ENCODE measurements at regions of chr5 and their contacts with region 1.

Region 1: DNA sequence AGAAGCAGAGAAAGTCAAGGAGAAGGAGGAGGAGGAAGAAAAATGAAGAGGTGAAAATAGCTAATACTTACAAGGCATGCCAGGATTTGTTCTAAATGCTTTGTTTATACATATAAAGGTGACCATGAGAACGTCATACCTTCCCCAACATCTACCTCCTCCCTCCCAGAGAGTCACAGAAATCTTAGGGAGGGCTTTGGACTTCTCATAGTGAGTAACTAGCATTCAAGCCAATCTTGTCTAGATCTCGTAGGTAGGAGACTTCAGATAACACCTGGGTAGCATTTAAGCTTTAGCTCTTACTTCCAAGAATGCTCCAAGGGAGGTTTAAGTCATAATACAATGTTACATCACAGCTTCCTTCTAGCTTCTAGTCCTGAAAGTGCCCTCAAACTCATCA is 36.5 kb upstream of the GPBP1 start:
- DNase-seq: no peak
- H3K4me3 Mint-ChIP-seq: no peak overlapping the region
- H3K27ac Mint-ChIP-seq: no peak overlapping the region
- H3K4me1 Mint-ChIP-seq: no peaks in the 10 kb centered on the region
- H3K27me3 Mint-ChIP-seq: no peaks in the 10 kb centered on the region

Region 2: GRCh38 chr5:56900858-56901578 is 236.4 kb before region 1 on chr5:
- CTCF ChIA-PET with region 1: interaction called, 78 read pairs
- POLR2A ChIA-PET with region 1: no interaction called
- intact Hi-C with region 1: loop called (anchors 1 kb)
- DNase-seq: peak; percentile 24
- H3K4me3 Mint-ChIP-seq: no peak overlapping the region
- H3K27ac Mint-ChIP-seq: no peak overlapping the region
- H3K4me1 Mint-ChIP-seq: peaks cover 5% of the 10 kb centered on the region
- H3K27me3 Mint-ChIP-seq: no peaks in the 10 kb centered on the region

Region 3: GRCh38 chr5:56909294-56910209 is 227.8 kb before region 1 on chr5 and contains the start of gene SETD9:
- CTCF ChIA-PET with region 1: interaction called, 78 read pairs
- POLR2A ChIA-PET with region 1: no interaction called
- intact Hi-C with region 1: no loop called
- DNase-seq: peak; percentile 97
- H3K4me3 Mint-ChIP-seq: peak within 1 kb of the TSS; percentile 77
- H3K27ac Mint-ChIP-seq: peak within 1 kb of the TSS; percentile 94
- H3K4me1 Mint-ChIP-seq: peaks cover 20% of the 10 kb centered on the region
- H3K27me3 Mint-ChIP-seq: no peaks in the 10 kb centered on the region
- total RNA-seq, gene SETD9: 5.1 to 7.4 TPM

Region 4: DNA sequence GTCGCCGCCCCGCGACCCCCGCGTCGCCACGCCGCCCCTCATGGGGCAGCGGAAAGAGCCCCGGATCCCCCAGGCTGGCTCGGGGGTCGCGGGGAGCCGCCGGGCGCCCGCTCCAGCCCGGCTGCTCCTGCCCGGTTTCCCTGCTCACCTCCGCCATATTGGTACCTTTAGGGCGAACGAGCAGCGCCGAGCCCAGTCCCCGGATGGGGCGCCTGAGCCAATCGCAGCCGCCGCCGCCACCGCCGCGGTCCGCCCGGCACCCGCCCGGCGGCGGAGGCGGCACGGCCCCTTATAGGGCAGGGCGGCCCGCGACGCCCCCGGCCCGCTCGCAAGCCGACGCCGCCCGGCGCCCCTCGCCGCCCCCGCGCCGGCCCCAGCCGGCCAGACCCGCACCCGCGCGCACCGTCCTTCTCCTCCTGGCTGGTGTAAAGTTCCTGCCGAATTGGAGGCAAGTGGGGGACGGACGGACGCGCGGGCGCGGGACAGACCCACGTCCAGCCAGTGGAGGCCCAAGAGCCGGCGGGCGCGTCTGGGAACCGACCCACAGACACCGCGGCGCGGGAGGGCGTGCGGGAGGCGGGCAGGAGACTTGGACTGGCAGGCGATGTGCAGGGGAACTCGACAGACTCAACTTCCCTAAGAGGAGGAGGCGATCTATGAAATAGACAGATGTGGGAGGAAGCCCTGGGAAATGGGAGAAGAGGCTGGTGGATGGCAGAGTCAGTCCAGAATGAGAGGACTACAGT is 185.3 kb before region 1 on chr5 and contains the start of gene MIER3:
- CTCF ChIA-PET with region 1: interaction called, 17 read pairs
- POLR2A ChIA-PET with region 1: no interaction called
- intact Hi-C with region 1: no loop called
- DNase-seq: peak; percentile 86
- H3K4me3 Mint-ChIP-seq: peak within 1 kb of the TSS; percentile 96
- H3K27ac Mint-ChIP-seq: peak within 1 kb of the TSS; percentile 69
- H3K4me1 Mint-ChIP-seq: peaks cover 15% of the 10 kb centered on the region
- H3K27me3 Mint-ChIP-seq: peaks cover 11% of the 10 kb centered on the region
- total RNA-seq, gene MIER3: 16.5 to 17.2 TPM

Region 5: GRCh38 chr5:57150681-57151080 is 13.3 kb after region 1 on chr5:
- CTCF ChIA-PET with region 1: interaction called, 13 read pairs
- POLR2A ChIA-PET with region 1: no interaction called
- intact Hi-C with region 1: no loop called
- DNase-seq: no peak
- H3K4me3 Mint-ChIP-seq: no peak overlapping the region
- H3K27ac Mint-ChIP-seq: no peak overlapping the region
- H3K4me1 Mint-ChIP-seq: no peaks in the 10 kb centered on the region
- H3K27me3 Mint-ChIP-seq: peaks cover 3% of the 10 kb centered on the region

Region 6: DNA sequence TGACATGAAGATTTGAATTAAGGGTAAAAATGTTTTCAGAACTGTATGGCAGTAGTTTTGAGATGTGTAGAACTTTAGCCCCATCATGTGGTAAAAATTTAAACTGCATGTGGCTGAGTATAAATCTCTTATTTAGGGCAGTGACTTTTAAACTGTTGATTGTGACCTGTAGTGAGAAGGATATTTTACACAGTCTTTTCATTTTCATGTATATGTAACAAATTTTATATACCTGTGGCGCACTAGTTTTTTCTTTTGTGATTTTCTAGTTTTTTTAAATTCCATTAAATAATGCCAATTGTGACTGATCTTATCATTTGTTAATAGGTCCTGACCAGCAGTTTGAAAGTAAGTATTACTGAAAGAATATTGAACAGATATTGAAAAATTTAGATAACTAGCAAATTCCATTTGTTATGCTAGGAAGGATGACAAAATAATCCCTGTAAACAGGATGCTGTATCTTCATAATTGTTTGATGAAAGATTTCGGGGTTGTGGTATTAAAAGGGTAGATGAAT is 83.7 kb after region 1 on chr5:
- CTCF ChIA-PET with region 1: interaction called, 23 read pairs
- POLR2A ChIA-PET with region 1: interaction called, 4 read pairs
- intact Hi-C with region 1: loop called (anchors 2 kb)
- DNase-seq: no peak
- H3K4me3 Mint-ChIP-seq: no peak overlapping the region
- H3K27ac Mint-ChIP-seq: peak overlapping the region; percentile 56
- H3K4me1 Mint-ChIP-seq: peaks cover 51% of the 10 kb centered on the region
- H3K27me3 Mint-ChIP-seq: no peaks in the 10 kb centered on the region